ENCODE measurements at regions of chr6 and their contacts with region 1.

Region 1: DNA sequence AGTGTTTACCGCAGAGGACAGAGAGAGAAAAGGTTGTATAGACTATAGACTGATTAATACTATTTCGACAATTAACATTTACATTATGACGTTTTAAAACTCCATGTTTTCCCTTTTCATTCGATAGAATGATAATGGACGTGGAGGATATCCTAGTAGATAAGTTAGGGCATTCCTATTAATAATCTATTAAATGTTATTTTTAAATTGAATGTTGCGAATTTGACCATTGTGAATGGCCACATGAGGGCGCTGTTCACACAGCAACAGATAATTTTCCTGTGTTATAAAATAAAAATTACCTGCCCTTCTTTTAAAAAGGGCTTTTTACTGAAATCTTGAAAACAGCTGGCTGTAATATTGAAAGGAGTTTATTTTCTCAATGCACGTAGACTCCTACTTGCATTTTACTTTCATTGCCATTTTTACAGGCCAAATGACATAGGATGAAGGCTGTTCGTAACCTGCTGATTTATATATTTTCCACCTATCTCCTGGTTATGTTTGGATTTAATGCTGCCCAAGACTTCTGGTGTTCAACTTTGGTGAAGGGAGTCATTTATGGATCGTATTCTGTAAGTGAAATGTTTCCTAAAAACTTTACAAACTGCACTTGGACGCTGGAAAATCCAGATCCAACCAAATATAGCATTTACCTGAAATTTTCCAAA is 3.3 kb downstream of the ADGRB3 start:
- H3K4me3 ChIP-seq: no peak overlapping the region
- H3K27ac ChIP-seq: no peak overlapping the region
- H3K4me1 ChIP-seq: no peaks in the 10 kb centered on the region
- CTCF ChIP-seq: no peak

Region 2: GRCh38 chr6:68447112-68447511 is 191.3 kb before region 1 on chr6:
- CTCF ChIA-PET with region 1: no interaction called
- POLR2A ChIA-PET with region 1: no interaction called
- H3K4me3 ChIP-seq: no peak overlapping the region
- H3K27ac ChIP-seq: no peak overlapping the region
- H3K4me1 ChIP-seq: no peaks in the 10 kb centered on the region
- CTCF ChIP-seq: no peak

Region 3: DNA sequence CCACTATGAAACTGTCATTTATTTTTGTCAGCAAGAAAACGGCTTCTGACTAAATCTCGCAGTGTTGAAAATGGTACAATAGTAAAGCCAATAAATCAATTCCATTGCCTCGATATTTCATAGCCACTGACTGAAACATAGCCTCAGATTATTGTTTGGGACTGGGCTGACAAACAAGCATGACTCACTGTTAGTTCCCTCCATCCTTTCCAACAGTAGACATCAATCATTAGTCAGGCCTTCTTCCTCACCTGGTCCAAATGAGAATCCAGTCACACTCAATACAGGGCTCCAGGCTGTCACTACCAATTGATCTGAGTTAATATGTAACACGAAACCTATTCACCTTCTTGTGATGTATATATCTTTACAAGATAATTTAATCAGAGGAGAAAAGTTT is 62.8 kb after region 1 on chr6:
- CTCF ChIA-PET with region 1: no interaction called
- POLR2A ChIA-PET with region 1: no interaction called
- H3K4me3 ChIP-seq: no peak overlapping the region
- H3K27ac ChIP-seq: no peak overlapping the region
- H3K4me1 ChIP-seq: no peaks in the 10 kb centered on the region
- CTCF ChIP-seq: no peak

Region 4: GRCh38 chr6:68778356-68779020 is 140.1 kb after region 1 on chr6:
- CTCF ChIA-PET with region 1: interaction called, 17 read pairs
- POLR2A ChIA-PET with region 1: no interaction called
- H3K4me3 ChIP-seq: no peak overlapping the region
- H3K27ac ChIP-seq: no peak overlapping the region
- H3K4me1 ChIP-seq: no peaks in the 10 kb centered on the region
- CTCF ChIP-seq: 0 out of 2 replicates have a peak, but pooled peaks have one; percentile 15

Region 5: DNA sequence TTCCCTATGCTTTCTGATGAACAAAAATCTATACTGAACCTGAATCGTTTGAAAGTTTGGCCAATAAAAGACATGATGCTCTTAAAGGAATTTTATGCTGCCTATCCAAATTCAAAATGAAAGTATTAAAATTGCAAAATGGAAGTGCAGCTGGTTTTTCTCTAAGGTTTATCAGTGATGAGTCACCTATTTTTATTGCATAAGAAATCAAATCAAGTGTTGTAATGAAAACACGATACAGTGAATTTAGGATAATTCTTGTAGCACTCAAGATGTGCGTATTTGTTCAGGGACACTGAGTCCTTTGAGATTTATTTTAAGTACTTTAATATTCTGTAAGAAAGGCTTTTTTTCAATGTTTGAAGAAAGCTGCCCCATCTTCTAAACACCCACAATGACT is 406.2 kb after region 1 on chr6:
- CTCF ChIA-PET with region 1: no interaction called
- POLR2A ChIA-PET with region 1: no interaction called
- H3K4me3 ChIP-seq: no peak overlapping the region
- H3K27ac ChIP-seq: no peak overlapping the region
- H3K4me1 ChIP-seq: no peaks in the 10 kb centered on the region
- CTCF ChIP-seq: no peak